Posterior cingulate gyrus (tissue), 11 donors: ENCODE measurements at regions of chrX and their contacts with region 1.

Region 1: DNA sequence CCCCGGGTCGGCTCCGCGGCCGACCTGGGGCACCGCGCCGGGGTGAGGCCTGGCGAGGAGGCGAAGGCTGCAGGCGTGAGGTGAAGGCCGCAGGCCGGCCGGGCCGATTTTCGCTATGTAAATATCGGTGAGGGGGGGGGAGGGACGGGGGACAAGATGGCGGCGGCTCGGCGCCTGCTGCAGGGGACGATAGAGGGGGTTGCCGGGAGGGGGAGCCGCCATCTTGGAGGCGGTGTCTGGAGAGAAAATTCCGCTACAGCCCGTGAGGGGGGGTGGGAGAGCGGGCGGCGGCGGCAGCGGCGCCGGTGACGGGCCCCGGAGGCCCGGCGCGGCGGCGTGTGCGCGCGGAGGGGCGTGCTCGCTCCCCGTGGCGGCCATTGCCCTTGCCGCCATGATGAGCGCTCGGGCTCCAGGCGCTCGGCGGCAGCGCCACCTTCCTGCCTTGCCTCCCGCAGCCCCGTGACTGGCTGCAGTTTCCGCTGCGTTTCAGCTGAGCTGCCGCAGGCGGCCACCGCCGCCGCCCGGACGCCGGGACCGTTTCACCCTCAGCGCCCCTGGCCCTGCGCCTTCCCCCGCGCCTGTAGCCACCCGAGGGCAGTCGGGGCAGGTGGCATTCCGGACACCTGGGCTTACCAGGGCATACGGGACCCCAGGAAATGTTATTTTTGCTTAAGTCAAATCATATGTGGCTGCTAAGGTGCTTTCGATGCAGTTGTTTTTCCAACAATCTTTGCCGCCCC is 692 bp downstream of the ZFX start:
- DNase-seq: peak; percentile 59 to 98 (median 89)

Region 2: DNA sequence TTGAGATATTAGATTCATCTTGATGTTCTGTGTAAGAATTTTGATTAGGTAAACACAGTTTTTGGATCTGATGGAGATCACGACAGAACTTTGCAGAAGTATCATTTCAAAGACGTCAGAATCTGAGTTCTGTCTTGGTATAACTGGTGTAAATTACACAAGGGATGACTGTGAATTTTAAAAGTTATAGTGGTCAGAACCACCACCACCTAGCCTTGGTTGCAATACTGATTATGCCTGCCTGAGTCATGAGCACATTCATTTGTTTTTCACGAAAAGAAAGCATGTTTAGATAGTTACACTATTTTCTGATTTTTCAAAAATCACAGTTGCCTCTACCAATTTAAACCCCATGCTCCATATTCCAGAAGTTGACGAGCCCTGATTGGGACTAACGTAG is 54.1 kb after region 1 on chrX:
- intact Hi-C with region 1: loop called (anchors 10 kb)
- DNase-seq: no peak